GM23248 (cell line): ENCODE measurements at regions of chr6 and their contacts with region 1.

Region 1: DNA sequence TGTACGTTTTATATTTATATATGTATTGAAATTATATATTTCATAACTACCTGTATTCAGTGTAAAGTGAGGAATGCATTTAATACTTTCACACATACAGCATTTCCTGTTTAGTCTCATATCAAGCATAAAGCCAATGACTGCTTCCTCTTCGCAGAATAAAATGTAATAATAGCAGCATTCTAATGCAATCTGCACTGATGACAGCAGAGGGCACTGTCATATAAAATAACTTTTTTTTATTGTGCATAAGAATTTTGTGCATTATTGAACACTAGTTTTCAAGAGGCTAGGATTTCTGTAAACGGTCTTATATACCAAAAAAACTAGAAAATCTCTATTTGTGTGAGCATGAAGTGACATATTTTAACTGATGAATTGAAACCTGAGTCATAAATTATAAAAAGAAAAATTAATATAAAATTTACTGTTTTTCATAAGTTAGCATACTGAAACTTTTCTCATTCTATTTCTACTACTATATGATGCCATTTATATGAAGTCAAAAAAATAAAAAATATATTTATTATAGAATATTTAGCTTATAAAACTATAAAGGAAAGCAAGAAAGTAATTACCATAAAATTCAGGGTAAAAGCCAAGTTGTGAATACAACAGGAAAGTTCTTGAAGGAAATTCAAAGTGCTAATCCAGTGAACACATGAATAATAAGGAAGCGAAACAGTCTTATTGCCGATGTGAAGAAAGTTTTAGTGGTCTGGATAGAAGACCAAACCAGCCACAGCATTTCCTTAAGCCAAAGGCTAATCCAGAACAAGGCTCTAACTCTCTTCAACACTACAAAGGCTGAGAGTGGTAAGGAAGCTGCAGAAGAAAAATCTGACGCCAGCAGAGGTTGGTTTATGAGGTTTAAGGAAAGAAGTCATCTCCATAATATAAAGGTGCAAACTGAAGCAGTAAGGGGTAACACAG is 36.3 kb downstream of the RNF146 start:
- DNase-seq: peak; percentile 72
- H3K4me3 ChIP-seq: no peak overlapping the region
- H3K27ac ChIP-seq: no peak overlapping the region
- H3K4me1 ChIP-seq: peaks cover 27% of the 10 kb centered on the region
- H3K27me3 ChIP-seq: no peaks in the 10 kb centered on the region

Region 2: DNA sequence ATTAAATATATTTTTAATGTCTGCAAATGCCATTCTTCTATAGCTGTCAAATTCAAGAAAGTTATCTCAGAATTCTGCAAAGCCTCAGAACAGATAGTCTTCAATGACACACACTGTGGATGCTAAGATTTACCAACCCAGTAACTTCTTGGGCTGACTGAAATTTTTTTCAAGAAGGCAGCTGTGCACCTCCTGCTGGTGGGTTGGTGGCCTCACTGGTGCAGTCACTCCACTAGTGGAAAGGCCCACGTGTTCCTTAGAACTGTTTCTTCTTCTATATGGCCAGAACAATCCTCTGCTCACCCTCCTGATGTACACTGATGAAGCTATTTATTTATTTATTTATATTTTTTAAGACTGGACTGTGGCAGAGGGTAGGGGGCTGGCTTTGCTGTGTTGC is 244.2 kb after region 1 on chr6:
- in situ Hi-C with region 1: loop called (anchors 10 kb)
- DNase-seq: peak; percentile 40
- H3K4me3 ChIP-seq: no peak overlapping the region
- H3K27ac ChIP-seq: no peak overlapping the region
- H3K4me1 ChIP-seq: peaks cover 12% of the 10 kb centered on the region
- H3K27me3 ChIP-seq: no peaks in the 10 kb centered on the region

Region 3: GRCh38 chr6:127748290-127748689 is 445.3 kb after region 1 on chr6:
- in situ Hi-C with region 1: no loop called
- DNase-seq: no peak
- H3K4me3 ChIP-seq: no peak overlapping the region
- H3K27ac ChIP-seq: no peak overlapping the region
- H3K4me1 ChIP-seq: no peaks in the 10 kb centered on the region
- H3K27me3 ChIP-seq: no peaks in the 10 kb centered on the region

Region 4: DNA sequence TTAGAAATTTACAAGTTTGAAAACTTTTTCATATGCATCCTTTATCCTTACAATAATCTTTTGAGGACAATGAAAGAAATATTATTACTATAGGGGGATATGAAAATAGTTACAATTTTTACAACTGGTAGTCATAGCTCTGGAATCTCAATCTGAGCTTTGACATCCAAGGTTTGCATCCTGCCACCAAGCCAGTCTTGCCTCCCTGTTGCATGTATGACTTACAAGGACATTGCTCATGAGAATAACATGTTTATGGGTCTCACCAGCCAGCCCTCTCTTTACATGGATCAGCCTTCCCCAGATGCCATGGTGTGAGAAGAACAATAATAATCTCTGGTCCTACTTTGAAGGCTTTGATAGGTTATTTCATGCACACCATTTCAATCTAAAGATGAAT is 530.3 kb after region 1 on chr6:
- in situ Hi-C with region 1: no loop called
- DNase-seq: no peak
- H3K4me3 ChIP-seq: no peak overlapping the region
- H3K27ac ChIP-seq: no peak overlapping the region
- H3K4me1 ChIP-seq: 0 out of 2 replicates have a peak, but pooled peaks cover 4% of the 10 kb centered on the region
- H3K27me3 ChIP-seq: no peaks in the 10 kb centered on the region